ENCODE measurements at regions of chr7 and their contacts with region 1.

Region 1: GRCh38 chr7:99949638-99950228 is 20.3 kb upstream of the GJC3 start:
- DNase-seq: no peak
- ATAC-seq: no peak
- H3K4me3 ChIP-seq: no peak overlapping the region
- H3K27ac ChIP-seq: no peak overlapping the region
- H3K4me1 ChIP-seq: peaks cover 0 to 9% (median 0%) of the 10 kb centered on the region in 9 donors
- H3K27me3 ChIP-seq: peaks cover 0 to 12% (median 4%) of the 10 kb centered on the region in 7 donors
- CTCF ChIP-seq: peak in 8 of 9 donors; percentile 17 to 61 (median 45)

Region 2: GRCh38 chr7:99910976-99911375 is 38.8 kb before region 1 on chr7:
- intact Hi-C with region 1: loop called in 1 of 10 experiments (anchors 5 kb)
- DNase-seq: no peak
- ATAC-seq: no peak
- H3K4me3 ChIP-seq: no peak overlapping the region
- H3K27ac ChIP-seq: no peak overlapping the region
- H3K4me1 ChIP-seq: peaks cover 0 to 14% (median 2%) of the 10 kb centered on the region in 9 donors
- H3K27me3 ChIP-seq: no peaks in the 10 kb centered on the region
- CTCF ChIP-seq: no peak